ENCODE measurements at regions of chr4 and their contacts with region 1.

Region 1: DNA sequence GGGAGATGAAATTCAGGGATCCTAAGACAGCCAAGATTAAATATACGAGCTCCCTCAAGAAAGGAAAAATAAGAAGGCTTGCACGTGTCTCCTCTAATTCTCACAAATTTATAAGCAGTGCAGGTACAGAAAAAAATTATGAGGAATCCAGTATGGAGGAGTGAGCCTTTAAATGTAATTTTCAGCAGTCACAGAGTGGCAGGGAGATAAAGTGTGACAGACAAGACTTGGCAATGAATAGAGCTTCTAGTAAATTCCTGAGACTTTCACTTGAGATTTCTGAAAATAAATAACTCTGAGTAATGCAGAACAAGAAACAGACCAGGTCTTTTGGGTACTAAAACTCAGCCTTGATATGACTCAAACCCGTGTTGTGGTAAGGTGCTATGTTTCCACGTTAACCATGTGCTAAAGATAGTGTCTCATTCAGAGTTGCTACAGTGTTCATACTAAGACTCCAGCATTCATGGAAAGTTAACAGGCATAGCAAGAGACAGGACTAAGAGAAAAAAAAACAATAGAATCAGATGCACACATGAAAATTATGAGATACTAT is 119.8 kb downstream of the SPOCK3 start:
- DNase-seq: no peak
- H3K4me3 ChIP-seq: no peak overlapping the region
- H3K4me3 Mint-ChIP-seq: no peak overlapping the region
- H3K27ac Mint-ChIP-seq: no peak overlapping the region
- H3K4me1 ChIP-seq: no peaks in the 10 kb centered on the region
- H3K4me1 Mint-ChIP-seq: no peaks in the 10 kb centered on the region
- H3K27me3 ChIP-seq: no peaks in the 10 kb centered on the region
- H3K27me3 Mint-ChIP-seq: no peaks in the 10 kb centered on the region
- CTCF ChIP-seq: no peak

Region 2: DNA sequence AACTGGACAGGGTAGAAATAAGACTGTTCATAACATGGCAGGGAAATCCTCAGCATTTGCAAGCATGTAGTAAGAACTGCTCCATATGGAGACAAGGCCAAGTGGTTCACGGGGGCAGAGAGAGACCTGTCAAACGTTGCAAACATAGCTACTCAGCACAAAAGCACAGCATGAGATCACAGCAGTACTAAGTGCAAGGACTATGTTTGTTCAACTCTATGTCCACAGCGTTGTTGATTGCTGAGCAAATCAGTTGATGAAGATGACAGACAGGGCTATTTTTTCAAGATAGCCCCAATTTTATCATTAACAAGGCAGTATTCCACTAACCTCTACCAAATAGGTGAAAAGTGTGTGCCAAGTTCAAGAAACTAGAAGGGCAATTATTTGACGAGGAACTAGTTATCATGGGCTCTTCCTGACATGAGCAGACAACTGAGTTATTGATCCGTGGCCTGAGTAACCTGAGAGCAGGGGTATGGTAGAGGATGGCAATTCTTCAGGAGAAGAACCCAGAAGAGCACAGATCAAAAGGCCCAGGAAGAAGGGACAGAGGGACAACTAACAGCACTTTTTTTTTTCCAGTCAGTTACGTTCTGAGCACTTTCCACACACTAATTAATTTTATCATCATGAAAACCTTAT is 62.4 kb after region 1 on chr4:
- CTCF ChIA-PET with region 1: no interaction called
- POLR2A ChIA-PET with region 1: no interaction called
- intact Hi-C with region 1: loop called (anchors 5 kb)
- DNase-seq: no peak
- H3K4me3 ChIP-seq: no peak overlapping the region
- H3K4me3 Mint-ChIP-seq: no peak overlapping the region
- H3K27ac Mint-ChIP-seq: no peak overlapping the region
- H3K4me1 ChIP-seq: peaks cover 10% of the 10 kb centered on the region
- H3K4me1 Mint-ChIP-seq: peaks cover 9% of the 10 kb centered on the region
- H3K27me3 ChIP-seq: no peaks in the 10 kb centered on the region
- H3K27me3 Mint-ChIP-seq: no peaks in the 10 kb centered on the region
- CTCF ChIP-seq: no peak